OCI-LY7 (cell line): ENCODE measurements at regions of chr9 and their contacts with region 1.

Region 1: DNA sequence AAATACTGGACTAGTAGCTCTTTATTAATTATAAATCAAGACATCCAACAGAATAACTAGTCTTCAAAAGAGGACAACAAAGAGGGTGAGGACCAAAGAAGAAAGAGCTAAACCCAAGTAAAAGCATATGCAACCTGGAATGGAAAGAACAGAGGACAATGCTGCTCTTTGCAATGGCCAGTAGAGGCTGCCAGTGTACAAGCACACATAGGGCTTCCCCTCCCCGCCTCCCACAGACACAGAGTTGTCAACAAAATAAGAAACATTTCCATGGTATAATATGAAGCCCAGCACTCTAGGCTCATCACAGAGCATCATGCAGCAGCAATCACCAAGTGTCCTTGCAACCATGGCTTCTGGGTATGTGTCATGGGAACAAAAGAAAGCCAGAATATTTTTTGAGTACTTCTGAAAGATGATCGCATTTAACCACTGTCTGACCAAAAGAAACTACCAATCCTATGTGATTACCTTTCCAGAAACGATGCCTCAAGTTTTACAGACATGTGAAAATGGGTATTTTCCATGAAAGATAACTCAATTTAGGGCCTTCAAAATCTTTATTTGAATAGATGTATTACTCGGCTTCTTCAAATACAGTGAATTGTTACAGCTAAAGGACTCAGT is 58.1 kb downstream of the RFX3 start:
- DNase-seq: peak; percentile 81
- H3K4me3 ChIP-seq: no peak overlapping the region
- H3K27ac ChIP-seq: no peak overlapping the region
- H3K4me1 ChIP-seq: peaks cover 8% of the 10 kb centered on the region
- CTCF ChIP-seq: peak; percentile 99

Region 2: GRCh38 chr9:3240656-3241268 is 226.9 kb before region 1 on chr9:
- CTCF ChIA-PET with region 1: no interaction called
- POLR2A ChIA-PET with region 1: no interaction called
- intact Hi-C with region 1: no loop called
- DNase-seq: peak; percentile 85
- H3K4me3 ChIP-seq: no peak overlapping the region
- H3K27ac ChIP-seq: no peak overlapping the region
- H3K4me1 ChIP-seq: peaks cover 8% of the 10 kb centered on the region
- CTCF ChIP-seq: peak; percentile 97

Region 3: DNA sequence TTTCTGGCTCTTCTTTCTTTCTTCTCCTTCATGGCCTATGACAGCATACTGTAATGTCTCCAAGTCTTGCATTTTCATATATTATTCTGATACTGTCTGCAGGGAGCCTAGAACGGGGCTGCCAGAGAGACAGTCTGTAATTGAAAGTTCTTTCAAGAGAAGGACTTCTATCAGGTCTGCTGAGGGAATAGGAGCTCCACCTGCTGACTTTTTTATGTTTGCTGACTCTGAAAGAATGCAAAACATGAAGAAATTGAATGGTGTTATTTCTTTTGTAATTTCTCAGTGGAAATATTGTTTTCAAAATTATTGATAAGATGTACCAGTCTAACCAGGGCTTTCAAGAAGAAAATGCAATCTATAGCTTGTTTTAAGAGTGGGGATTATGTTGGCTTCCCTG is 179.9 kb after region 1 on chr9:
- CTCF ChIA-PET with region 1: no interaction called
- POLR2A ChIA-PET with region 1: no interaction called
- intact Hi-C with region 1: loop called (anchors 5 kb)
- DNase-seq: peak; percentile 4
- H3K4me3 ChIP-seq: no peak overlapping the region
- H3K27ac ChIP-seq: no peak overlapping the region
- H3K4me1 ChIP-seq: no peaks in the 10 kb centered on the region
- CTCF ChIP-seq: peak; percentile 45

Region 4: GRCh38 chr9:3732077-3733038 is 264.7 kb after region 1 on chr9:
- CTCF ChIA-PET with region 1: no interaction called
- POLR2A ChIA-PET with region 1: interaction called, 3 read pairs
- intact Hi-C with region 1: loop called (anchors 1 kb)
- DNase-seq: peak; percentile 62
- H3K4me3 ChIP-seq: no peak overlapping the region
- H3K27ac ChIP-seq: no peak overlapping the region
- H3K4me1 ChIP-seq: no peaks in the 10 kb centered on the region
- CTCF ChIP-seq: peak; percentile 78

Region 5: DNA sequence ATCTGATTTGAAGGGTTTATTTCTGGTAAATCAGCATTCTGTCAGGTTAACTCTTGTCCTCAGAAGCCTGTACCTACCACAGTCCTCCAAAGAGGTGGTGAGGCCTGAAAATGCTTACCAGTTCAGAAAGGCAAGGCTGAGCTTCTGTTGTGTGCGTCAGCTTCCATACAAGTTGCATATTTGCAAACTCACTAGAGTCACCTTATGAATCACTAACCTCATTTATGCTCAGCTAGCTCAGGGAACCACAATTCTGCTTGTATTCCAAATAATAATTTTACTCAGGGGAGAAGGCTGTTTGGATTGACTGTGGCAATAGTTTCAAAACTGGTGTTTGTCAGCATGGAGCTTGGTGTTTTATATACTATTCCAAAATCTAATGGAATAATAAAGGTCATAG is 413.1 kb after region 1 on chr9:
- CTCF ChIA-PET with region 1: no interaction called
- POLR2A ChIA-PET with region 1: no interaction called
- intact Hi-C with region 1: loop called (anchors 10 kb)
- DNase-seq: no peak
- H3K4me3 ChIP-seq: no peak overlapping the region
- H3K27ac ChIP-seq: no peak overlapping the region
- H3K4me1 ChIP-seq: no peaks in the 10 kb centered on the region
- CTCF ChIP-seq: no peak

Region 6: DNA sequence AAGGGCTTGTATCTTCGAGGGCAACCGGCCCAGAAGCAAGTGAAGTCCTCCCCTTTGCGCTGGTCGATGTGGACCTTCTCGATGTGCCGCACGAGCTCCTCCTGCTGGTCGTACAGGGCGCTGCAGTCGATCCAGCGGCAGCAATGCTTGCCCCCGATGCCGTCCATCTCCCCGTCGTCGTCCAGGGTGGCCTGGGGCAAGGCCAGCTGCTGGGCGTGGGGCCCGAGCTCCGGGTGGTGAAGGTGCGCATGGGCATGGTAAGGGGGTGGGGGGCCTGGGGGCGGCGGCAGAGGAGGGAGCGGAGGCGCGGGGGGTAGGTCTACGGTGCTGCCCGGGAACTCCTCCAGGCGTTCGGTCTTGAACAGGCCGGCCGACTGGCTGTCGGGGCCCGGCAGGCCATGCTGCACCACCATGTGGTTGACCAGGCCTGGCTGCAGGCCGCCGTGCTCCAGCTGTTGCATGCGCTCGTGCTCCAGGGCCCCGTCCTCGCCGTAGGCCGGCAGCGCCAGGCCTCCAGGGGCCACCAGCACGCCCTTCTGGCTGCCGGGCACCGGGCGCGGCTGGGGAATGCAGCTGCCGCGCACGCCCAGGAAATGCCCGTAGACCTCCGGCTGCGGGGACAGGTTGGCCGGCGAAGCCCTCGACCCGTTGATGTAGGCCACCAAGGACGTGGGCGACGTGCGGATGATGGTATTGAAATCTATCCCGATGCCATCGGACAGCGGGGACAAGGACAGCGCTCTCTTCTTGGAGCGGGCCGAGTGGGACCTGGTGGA is 650.3 kb after region 1 on chr9:
- CTCF ChIA-PET with region 1: no interaction called
- POLR2A ChIA-PET with region 1: no interaction called
- intact Hi-C with region 1: loop called (anchors 5 kb)
- DNase-seq: peak; percentile 47
- H3K4me3 ChIP-seq: no peak overlapping the region
- H3K27ac ChIP-seq: no peak overlapping the region
- H3K4me1 ChIP-seq: no peaks in the 10 kb centered on the region
- CTCF ChIP-seq: peak; percentile 79